Dendritic cell treated with granulocyte-macrophage colony-stimulating factor and Interleukin-4, amounts not matched to agents 40 ng/mL and 50 ng/mL, for 4 days (primary cell): ENCODE measurements at regions of chr10 and their contacts with region 1.

Region 1: GRCh38 chr10:91923371-91924211 is at the start of gene BTAF1:
- H3K4me3 Mint-ChIP-seq: peak within 1 kb of the TSS; percentile 90
- H3K27ac Mint-ChIP-seq: peak within 1 kb of the TSS; percentile 95
- H3K4me1 Mint-ChIP-seq: peaks cover 22% of the 10 kb centered on the region
- H3K27me3 Mint-ChIP-seq: no peaks in the 10 kb centered on the region

Region 2: DNA sequence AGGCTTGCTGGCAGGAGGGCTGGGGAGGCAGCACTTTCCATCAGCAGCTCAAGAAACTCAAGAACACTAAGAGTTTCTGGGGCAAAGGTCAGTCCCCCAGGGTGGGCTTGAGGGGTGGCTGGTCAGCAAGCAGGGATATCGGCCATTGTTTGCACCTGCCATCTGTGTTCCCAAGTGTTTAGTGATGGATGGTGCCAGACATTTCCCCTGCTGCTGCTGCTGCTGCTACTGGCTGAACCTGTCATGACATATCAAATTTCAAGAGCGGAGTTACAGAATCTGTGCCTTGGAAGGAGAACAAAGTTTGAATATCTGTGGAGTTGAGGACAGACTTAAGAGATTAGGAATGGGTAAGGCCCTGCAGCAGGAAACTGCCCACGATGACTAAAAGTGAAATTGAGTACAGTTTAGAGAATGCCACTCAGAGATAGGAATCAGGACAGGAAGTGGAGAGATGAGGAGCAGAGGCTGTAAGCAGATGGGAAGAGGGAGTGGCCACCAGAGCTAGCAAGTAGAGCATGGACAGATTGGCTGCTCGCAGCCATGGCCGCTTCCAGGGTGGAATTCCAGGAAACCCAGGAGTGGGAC is 251.5 kb before region 1 on chr10:
- intact Hi-C with region 1: no loop called
- H3K4me3 Mint-ChIP-seq: no peak overlapping the region
- H3K27ac Mint-ChIP-seq: no peak overlapping the region
- H3K4me1 Mint-ChIP-seq: no peaks in the 10 kb centered on the region
- H3K27me3 Mint-ChIP-seq: peaks cover 1% of the 10 kb centered on the region

Region 3: DNA sequence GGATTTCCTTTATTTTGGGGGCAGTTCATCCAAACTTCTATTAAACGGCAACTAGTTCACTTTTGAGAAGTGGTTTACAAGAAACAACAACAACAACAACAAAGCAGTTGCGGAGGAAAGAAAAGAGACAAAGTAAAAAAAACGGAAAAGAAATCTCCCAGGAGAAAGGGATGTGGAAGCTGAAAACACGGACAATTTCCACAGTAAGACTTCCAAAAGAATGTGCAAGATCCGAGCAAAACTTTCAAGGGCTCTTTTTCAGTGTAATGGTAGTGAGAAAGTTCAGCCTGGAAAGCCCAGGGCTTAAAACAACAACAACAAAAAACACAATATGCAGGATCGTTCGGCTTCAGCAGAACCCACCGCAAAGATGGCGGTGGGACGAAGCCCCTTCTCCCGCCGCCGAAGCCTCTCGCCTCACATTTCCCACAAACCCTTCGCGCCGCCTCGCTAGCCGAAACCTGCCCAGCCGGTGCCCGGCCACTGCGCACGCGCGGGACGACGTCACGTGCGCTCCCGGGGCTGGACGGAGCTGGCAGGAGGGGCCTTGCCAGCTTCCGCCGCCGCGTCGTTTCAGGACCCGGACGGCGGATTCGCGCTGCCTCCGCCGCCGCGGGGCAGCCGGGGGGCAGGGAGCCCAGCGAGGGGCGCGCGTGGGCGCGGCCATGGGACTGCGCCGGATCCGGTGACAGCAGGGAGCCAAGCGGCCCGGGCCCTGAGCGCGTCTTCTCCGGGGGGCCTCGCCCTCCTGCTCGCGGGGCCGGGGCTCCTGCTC is 125.5 kb before region 1 on chr10 and contains the start of gene TNKS2:
- intact Hi-C with region 1: loop called (anchors 5 kb)
- H3K4me3 Mint-ChIP-seq: peak within 1 kb of the TSS; percentile 96
- H3K27ac Mint-ChIP-seq: peak within 1 kb of the TSS; percentile 99
- H3K4me1 Mint-ChIP-seq: peaks cover 52% of the 10 kb centered on the region
- H3K27me3 Mint-ChIP-seq: peaks cover 6% of the 10 kb centered on the region